ENCODE measurements at regions of chr5 and their contacts with region 1.

Region 1: GRCh38 chr5:95835682-95836385 is 13.3 kb upstream of the GLRX start:
- DNase-seq: no peak
- H3K4me3 ChIP-seq: peak overlapping the region; percentile 80; the same call in 1 of the 2 replicates
- H3K27ac ChIP-seq: peak overlapping the region; percentile 54
- H3K4me1 ChIP-seq: peaks cover 42% of the 10 kb centered on the region
- H3K27me3 ChIP-seq: no peaks in the 10 kb centered on the region
- CTCF ChIP-seq: no peak

Region 2: GRCh38 chr5:95892780-95893354 is 57.0 kb after region 1 on chr5:
- CTCF ChIA-PET with region 1: no interaction called
- POLR2A ChIA-PET with region 1: interaction called, 10 read pairs
- intact Hi-C with region 1: no loop called
- DNase-seq: peak in 1 of 2 experiments; percentile 37
- H3K4me3 ChIP-seq: no peak overlapping the region
- H3K27ac ChIP-seq: no peak overlapping the region
- H3K4me1 ChIP-seq: no peaks in the 10 kb centered on the region
- H3K27me3 ChIP-seq: no peaks in the 10 kb centered on the region
- CTCF ChIP-seq: peak; percentile 57